ENCODE measurements at regions of chr2 and their contacts with region 1.

Region 1: GRCh38 chr2:10434886-10435819 is 13.0 kb downstream of the ODC1 start:
- DNase-seq: no peak
- H3K4me3 ChIP-seq: no peak overlapping the region
- CTCF ChIP-seq: peak; percentile 99

Region 2: DNA sequence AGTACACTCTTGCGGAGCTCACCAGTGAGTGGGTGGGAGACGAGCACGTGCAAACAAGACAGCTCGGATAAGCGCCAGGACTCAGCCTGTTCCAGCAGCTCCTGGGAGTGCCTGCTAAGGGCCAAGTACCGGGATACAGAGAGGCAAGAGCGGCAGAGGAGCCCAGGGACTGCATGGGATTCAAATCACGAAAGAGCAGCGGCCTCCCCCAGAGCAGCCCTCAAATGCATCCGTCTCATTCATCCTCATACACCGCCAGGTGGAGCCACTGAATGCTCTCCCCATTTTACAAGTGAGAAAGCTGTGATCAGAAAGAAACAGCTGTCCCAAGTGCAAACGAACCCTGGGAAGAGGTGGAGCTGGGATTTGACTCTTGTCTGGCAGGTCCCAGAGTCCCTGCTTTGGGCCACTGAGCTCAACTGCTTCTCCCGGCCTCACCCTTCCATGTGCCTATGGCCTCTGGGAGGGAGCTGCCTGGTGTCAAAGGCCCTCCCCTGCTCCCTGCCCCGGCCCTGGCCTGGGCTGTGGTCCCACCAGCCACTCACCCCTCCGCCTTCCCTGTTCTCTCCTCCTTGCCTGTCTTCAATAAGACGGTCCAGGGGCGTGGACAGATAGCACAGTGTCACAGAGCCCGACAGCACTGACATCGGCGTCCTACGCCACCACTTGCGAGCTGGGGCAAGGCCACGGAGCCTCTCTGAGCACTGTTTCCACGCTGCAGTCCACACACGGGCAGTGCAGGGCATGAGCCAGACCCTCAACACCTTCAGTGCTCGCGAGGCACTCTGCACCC is 664.6 kb before region 1 on chr2:
- CTCF ChIA-PET with region 1: interaction called, 12 read pairs
- POLR2A ChIA-PET with region 1: no interaction called
- DNase-seq: peak; percentile 10
- H3K4me3 ChIP-seq: no peak overlapping the region
- CTCF ChIP-seq: peak; percentile 76

Region 3: GRCh38 chr2:10079234-10079869 is 355.8 kb before region 1 on chr2:
- CTCF ChIA-PET with region 1: interaction called, 482 read pairs
- POLR2A ChIA-PET with region 1: interaction called, 3 read pairs
- DNase-seq: no peak
- H3K4me3 ChIP-seq: peak overlapping the region; percentile 45
- CTCF ChIP-seq: no peak

Region 4: DNA sequence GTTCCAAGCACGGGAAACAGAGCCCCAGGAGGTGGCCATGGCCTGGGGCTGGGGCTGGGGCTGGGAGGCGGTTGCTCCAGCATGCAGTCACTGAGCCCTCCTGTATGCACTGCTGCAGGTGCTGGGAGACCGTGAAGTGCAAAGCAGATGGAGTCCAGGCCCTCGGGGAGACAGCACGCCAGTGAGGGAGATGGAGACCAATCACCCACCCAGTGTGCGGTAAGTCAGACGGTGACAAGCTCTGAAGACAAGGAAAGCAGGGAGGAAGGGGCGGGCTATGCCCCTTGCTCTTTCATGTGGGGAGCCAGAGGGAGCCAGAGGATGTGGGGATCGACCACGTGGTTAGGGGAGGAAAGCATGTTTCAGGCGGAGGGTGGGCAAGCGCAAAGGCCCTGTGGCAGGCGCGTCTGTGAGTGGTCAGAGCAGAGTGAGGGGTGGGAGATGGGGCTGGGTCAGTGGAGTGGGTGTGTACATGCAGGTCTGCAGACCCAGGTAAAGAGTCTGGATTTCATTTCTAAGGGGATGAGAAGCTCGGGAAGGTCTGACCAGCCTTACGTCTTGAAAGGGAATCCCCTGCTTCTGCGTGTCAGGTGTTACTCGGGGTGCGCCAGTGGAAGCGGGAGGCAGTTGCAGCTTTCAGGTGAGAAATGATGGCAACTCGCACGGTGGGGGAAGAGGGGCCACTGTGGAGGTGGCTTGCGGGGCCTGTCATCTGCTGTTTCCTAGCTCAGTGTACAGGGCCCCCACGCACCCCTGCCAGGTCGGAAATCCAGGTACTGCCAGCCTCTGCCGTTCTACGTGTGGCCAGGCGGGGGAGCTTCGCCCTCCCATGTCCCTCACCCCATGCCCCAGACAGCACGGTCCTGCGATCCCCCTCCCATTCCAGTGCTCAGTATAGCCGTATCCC is 293.2 kb before region 1 on chr2:
- CTCF ChIA-PET with region 1: interaction called, 356 read pairs
- POLR2A ChIA-PET with region 1: no interaction called
- DNase-seq: no peak
- H3K4me3 ChIP-seq: no peak overlapping the region
- CTCF ChIP-seq: peak; percentile 56

Region 5: DNA sequence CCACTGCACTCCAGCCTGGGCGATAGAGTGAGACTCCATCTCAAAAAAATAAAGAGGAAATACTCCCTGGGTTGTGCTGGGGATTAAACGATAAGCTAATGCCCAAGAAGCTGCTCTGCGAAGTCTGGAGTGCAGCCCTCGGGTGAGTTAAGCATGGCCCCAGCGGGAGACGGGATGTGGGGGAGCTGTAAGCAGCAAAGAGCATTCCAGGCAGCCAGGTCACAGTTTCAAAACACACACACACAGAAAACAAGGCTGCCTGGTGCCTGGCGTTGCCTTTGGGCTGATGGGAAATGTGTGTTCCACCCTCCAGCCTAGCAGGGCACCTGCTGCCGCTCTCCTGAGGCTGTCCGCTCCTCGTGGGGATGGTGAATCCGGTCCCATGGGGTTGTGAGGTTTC is 11.1 kb before region 1 on chr2:
- CTCF ChIA-PET with region 1: interaction called, 46 read pairs
- POLR2A ChIA-PET with region 1: no interaction called
- DNase-seq: peak; percentile 80
- H3K4me3 ChIP-seq: no peak overlapping the region
- CTCF ChIP-seq: no peak

Region 6: GRCh38 chr2:10548626-10549025 is 113.5 kb after region 1 on chr2:
- CTCF ChIA-PET with region 1: no interaction called
- POLR2A ChIA-PET with region 1: no interaction called
- DNase-seq: no peak
- H3K4me3 ChIP-seq: no peak overlapping the region; the same call in 1 of the 2 replicates
- CTCF ChIP-seq: no peak

Region 7: GRCh38 chr2:10668402-10669012 is 233.4 kb after region 1 on chr2:
- CTCF ChIA-PET with region 1: interaction called, 13 read pairs
- POLR2A ChIA-PET with region 1: no interaction called
- DNase-seq: no peak
- H3K4me3 ChIP-seq: no peak overlapping the region
- CTCF ChIP-seq: peak; percentile 45

Measured in AG04449 (cell line).